ENCODE measurements at regions of chr2 and their contacts with region 1.

Region 1: DNA sequence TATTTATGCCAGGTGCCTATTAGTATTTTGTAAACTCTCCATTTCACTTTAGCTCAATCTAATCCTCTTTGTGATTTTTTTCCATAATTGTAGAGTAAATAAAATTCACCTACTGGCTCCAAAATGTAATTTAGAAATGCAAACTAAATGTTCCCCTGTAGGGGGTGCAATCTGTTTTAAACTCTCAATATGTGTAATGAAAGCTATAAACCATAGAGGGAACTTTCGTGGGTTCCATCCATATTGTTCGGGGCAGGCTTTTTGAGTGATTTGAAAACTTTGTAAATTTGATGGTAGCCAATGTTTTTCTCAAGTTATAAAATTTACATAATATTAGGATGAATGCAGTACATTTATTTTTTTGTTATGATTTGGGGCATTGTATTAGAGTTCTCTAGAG is 49.4 kb downstream of the TSPYL6 start:
- DNase-seq: no peak
- ATAC-seq: peak in 2 of 4 donors; percentile 49
- H3K4me3 ChIP-seq: no peak overlapping the region
- H3K27ac ChIP-seq: no peak overlapping the region
- H3K4me1 ChIP-seq: peaks cover 0 to 38% (median 25%) of the 10 kb centered on the region in 12 donors
- H3K27me3 ChIP-seq: no peaks in the 10 kb centered on the region
- CTCF ChIP-seq: peak; percentile 47 to 81 (median 68)
- POLR2A ChIP-seq: no peak

Region 2: DNA sequence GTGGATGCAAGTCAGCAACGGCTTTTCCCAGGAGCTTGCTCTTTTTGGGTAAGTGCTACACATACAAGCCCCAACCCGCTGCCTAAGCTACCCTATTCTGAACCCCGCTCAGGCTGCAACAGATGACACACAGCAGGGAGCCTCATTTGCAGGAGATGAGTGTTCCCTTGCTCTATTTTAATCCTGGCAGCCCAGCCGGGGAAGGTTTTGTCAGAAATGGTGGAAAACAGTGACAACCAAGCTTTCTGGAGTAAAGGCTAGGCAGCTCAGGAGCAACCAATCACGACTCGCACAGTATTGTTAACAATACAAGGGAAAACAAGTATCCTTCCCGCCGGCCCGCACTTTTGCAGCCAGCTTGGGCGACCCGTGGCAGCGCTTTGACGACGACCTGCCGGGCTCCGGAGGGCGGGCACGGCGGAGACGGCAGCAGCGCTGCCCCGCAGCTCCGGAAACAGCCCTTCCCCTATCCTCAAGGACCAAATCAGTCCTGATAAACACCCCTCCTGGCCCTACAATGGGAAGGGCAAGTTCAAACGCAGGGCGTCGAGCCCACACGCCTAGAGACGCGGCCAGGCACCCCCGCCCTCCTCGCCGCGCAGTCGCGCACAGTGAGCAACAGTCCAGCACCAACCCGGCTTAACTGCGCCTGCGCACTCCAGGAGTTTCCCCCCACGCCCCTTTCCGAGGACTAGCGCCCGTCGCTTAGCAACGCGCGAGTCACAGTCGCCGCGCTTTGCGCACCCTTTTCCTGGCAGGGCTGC is 123.7 kb after region 1 on chr2:
- intact Hi-C with region 1: loop called in 8 of 10 experiments (anchors 2 to 10 kb)
- DNase-seq: peak; percentile 97 to 99 (median 98)
- ATAC-seq: peak; percentile 97 to 99 (median 98)
- H3K4me3 ChIP-seq: peak overlapping the region; percentile 34 to 70 (median 59)
- H3K27ac ChIP-seq: peak overlapping the region; percentile 87 to 96 (median 92)
- H3K4me1 ChIP-seq: peaks cover 3 to 29% (median 13%) of the 10 kb centered on the region in 12 donors
- H3K27me3 ChIP-seq: no peaks in the 10 kb centered on the region
- CTCF ChIP-seq: no peak
- POLR2A ChIP-seq: peak; percentile 78 to 93

Region 3: DNA sequence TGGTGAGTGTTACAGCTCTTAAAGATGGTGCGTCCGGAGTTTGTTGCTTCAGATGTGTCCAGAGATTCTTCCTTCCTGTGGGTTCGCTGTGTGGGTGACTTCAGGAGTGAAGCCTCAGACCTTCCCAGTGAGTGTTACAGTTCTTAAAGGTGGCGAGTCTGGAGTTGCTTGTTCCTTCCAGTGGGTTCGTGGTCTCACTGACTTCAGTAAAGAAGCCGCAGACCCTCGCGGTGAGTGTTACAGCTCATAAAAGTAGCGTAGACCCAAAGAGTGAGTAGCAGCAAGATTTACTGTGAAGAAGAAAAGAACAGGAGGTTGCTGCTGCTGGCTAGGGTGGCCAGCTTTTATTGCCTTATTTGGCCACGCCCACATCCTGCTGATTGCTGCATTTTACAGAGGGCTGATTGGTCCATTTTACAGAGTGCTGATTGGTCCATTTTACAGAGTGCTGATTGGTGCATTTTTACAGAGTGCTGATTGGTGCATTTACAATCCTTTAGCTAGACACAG is 215.5 kb after region 1 on chr2:
- intact Hi-C with region 1: loop called in 1 of 10 experiments (anchors 5 kb)
- DNase-seq: no peak
- ATAC-seq: no peak
- H3K4me3 ChIP-seq: no peak overlapping the region
- H3K27ac ChIP-seq: peak overlapping the region in 2 of 12 donors; percentile 15 to 28
- H3K4me1 ChIP-seq: peaks cover 0 to 68% (median 46%) of the 10 kb centered on the region in 12 donors
- H3K27me3 ChIP-seq: no peaks in the 10 kb centered on the region
- CTCF ChIP-seq: no peak
- POLR2A ChIP-seq: no peak

Region 4: DNA sequence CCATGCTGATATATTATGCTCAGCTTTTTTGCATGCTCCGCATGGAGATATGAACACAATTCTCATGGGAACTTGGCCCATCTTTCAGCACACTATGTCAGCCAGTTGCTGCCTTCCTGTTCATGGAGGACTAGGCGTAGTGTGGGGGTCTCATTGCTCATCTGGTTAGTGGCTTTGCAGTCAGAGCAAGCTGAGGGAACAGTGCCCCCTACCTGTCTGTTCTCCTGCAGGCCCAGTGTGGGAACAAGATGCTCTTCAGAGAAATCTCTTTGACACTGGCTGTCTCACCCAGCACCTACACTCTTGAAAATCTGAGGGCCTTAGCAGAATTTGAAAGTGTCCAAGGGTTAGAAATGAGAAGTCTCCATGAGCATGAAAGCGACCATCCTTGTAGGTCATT is 296.6 kb after region 1 on chr2:
- intact Hi-C with region 1: loop called in 4 of 10 experiments (anchors 5 to 10 kb)
- DNase-seq: peak in 1 of 5 donors; percentile 35
- ATAC-seq: peak in 2 of 4 donors; percentile 30 to 41
- H3K4me3 ChIP-seq: no peak overlapping the region
- H3K27ac ChIP-seq: peak overlapping the region in 7 of 12 donors; percentile 2 to 59 (median 31)
- H3K4me1 ChIP-seq: peaks cover 42 to 100% (median 96%) of the 10 kb centered on the region in 12 donors
- H3K27me3 ChIP-seq: no peaks in the 10 kb centered on the region
- CTCF ChIP-seq: peak; percentile 22 to 58 (median 43)
- POLR2A ChIP-seq: no peak

Region 5: DNA sequence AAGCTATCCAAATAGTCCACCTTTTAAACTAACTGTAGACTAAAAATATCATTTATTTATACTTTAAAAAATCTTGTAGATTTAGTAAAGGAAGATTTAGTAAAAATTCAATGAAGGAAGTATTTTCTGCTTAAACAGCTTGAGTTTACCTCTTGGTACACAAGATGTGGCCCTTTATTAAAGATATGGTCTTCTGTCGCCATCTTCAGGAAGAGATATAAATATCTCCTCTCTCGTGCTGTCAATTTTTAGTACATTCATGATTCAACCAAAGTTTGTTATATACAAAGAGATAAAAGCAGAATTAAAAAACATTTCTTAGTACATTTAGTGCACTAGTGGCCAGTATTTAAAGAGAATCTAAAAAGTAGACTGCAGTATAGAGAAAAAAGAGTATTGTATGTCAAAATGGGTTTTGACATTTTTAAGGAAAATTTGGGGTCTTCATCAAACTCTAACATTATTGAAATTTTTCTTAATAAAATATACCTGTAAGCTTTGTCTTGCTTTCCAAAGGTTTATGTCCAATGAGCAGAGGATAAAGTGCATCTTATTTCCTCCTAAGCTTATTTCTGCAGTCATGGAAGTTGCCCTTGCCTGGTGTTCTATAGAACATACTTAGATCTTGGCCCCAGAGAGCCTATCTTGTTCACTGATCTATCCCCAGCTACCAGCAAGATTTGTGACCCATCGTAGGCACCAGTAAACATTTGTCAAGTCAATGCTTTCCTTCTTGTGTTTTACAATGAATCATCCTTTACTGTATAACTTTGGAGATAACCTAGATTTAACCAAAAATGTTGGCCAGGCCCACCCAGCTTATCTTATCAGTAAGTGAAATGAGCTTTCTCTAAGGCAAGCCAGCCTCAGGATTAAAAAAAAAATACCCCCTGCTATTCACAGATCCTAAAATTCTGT is 498.4 kb after region 1 on chr2:
- intact Hi-C with region 1: loop called in 1 of 10 experiments (anchors 10 kb)
- DNase-seq: no peak
- ATAC-seq: peak in 2 of 4 donors; percentile 59 to 63
- H3K4me3 ChIP-seq: no peak overlapping the region
- H3K27ac ChIP-seq: peak overlapping the region in 2 of 12 donors; percentile 11 to 30
- H3K4me1 ChIP-seq: peaks cover 0 to 13% (median 0%) of the 10 kb centered on the region in 12 donors
- H3K27me3 ChIP-seq: peaks cover 0 to 15% (median 0%) of the 10 kb centered on the region in 9 donors
- CTCF ChIP-seq: peak; percentile 45 to 85 (median 64)
- POLR2A ChIP-seq: no peak